Psoas muscle (tissue), 8 donors: ENCODE measurements at regions of chr17 and their contacts with region 1.

Region 1: DNA sequence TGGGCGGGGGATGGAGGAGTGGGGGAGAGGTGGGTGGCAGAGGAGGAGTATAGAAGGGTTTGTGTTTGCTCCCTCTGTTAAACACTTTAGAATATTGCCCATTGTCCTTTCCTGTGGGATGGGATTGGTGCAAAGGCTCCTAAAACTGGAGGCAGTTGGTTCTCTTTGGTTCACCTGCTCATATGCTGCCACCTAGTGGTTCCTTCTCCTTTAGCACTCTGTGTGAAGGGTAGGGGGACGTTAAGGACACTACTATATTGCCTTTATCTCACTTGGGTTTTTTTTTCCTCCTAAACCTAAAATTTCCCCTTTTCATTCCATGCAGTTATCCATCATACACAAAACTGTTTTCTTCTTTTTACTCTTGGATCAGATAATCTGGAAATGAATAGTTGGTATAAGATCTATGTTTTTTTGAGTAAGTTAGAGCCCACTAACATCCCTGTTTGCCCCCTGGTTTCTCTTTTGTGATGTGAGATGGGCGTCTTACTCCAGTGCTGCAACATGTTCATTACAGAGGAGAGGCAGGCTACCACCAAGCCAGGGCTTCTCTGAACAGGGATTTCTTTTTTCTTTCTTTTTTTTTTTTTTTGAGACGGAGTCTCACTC is 23.8 kb downstream of the SNX11 start:
- DNase-seq: no peak
- ATAC-seq: peak; percentile 70 to 94 (median 86)
- H3K4me3 ChIP-seq: no peak overlapping the region
- H3K27ac ChIP-seq: no peak overlapping the region
- H3K4me1 ChIP-seq: no peaks in the 10 kb centered on the region
- H3K27me3 ChIP-seq: no peaks in the 10 kb centered on the region
- CTCF ChIP-seq: peak; percentile 90

Region 2: GRCh38 chr17:47821424-47822391 is 309.6 kb before region 1 on chr17 and contains the start of gene OSBPL7:
- intact Hi-C with region 1: loop called in 1 of 2 experiments (anchors 10 kb)
- DNase-seq: peak; percentile 77 to 93
- ATAC-seq: peak; percentile 90 to 95 (median 94)
- H3K4me3 ChIP-seq: peak within 1 kb of the TSS; percentile 84
- H3K27ac ChIP-seq: peak within 1 kb of the TSS; percentile 92
- H3K4me1 ChIP-seq: peaks cover 21% of the 10 kb centered on the region
- H3K27me3 ChIP-seq: no peaks in the 10 kb centered on the region
- CTCF ChIP-seq: no peak
- total RNA-seq, gene OSBPL7: 2.6 to 23.4 (median 5.3) TPM

Region 3: GRCh38 chr17:47840740-47841603 is 290.3 kb before region 1 on chr17 and contains the start of gene SCRN2:
- intact Hi-C with region 1: loop called in 1 of 2 experiments (anchors 10 kb)
- DNase-seq: peak; percentile 89 to 96
- ATAC-seq: peak; percentile 96 to 99 (median 98)
- H3K4me3 ChIP-seq: peak within 1 kb of the TSS; percentile 77
- H3K27ac ChIP-seq: peak within 1 kb of the TSS; percentile 65
- H3K4me1 ChIP-seq: peaks cover 13% of the 10 kb centered on the region
- H3K27me3 ChIP-seq: peaks cover 0 to 7% (median 0%) of the 10 kb centered on the region in 3 donors
- CTCF ChIP-seq: peak; percentile 96
- total RNA-seq, gene SCRN2: 12.2 to 33.5 (median 19.5) TPM

Region 4: DNA sequence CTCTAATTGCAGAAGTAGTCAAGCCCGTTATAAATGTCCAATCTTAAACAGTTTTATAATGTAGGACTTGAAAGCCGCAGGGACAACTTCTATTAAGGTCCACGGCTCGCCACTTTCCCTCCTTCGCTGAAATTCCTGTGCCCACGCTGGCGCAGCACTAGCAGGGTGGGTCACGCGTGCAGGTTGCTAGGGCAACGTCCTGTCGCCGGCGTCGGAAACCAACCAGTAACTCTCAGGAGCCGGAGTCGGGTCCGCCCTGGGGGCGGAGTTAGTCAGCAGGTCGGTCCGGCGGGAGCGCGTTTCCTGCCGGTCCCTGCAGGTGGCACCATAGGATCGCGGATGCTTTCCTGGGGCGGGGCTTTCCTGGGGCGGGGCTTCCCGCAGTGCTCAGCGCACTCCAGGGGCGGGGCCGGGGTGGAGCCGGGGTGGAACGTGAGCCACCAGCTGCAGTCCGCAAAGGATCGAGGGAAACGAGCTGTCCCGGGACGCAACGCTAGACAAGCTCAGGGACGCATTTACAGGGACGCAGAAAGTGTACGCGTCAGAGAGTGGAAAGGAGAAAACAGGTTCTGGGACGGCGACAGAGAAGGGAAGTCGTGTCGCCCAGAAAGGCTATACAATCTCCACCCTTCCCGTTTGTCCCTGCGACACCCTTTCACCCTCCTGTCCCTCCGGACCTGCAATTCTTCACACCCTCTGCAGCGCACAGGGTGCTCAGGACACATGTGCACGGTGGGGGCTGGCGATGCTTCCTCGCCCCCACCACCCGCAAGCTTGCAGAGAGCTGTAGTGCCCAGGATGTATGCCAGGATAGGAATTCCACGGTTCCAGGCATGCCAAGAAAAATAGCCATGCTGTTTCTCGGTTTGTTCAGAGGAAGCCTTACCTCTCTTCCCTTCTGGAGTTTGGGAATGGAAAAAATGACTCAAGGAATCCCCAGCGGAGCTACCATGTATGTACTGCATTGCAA is 106.1 kb before region 1 on chr17:
- intact Hi-C with region 1: loop called (anchors 1 to 2 kb)
- DNase-seq: peak; percentile 97 to 99
- ATAC-seq: peak; percentile 86 to 89 (median 87)
- H3K4me3 ChIP-seq: peak overlapping the region; percentile 67
- H3K27ac ChIP-seq: peak overlapping the region; percentile 79
- H3K4me1 ChIP-seq: peaks cover 39% of the 10 kb centered on the region
- H3K27me3 ChIP-seq: peaks cover 0 to 3% (median 0%) of the 10 kb centered on the region in 3 donors
- CTCF ChIP-seq: peak; percentile 67

Region 5: GRCh38 chr17:48074315-48075081 is 56.8 kb before region 1 on chr17:
- intact Hi-C with region 1: loop called in 1 of 2 experiments (anchors 5 kb)
- DNase-seq: peak; percentile 58 to 83
- ATAC-seq: peak; percentile 80 to 83 (median 80)
- H3K4me3 ChIP-seq: no peak overlapping the region
- H3K27ac ChIP-seq: peak overlapping the region; percentile 69
- H3K4me1 ChIP-seq: peaks cover 15% of the 10 kb centered on the region
- H3K27me3 ChIP-seq: no peaks in the 10 kb centered on the region
- CTCF ChIP-seq: peak; percentile 87

Region 6: DNA sequence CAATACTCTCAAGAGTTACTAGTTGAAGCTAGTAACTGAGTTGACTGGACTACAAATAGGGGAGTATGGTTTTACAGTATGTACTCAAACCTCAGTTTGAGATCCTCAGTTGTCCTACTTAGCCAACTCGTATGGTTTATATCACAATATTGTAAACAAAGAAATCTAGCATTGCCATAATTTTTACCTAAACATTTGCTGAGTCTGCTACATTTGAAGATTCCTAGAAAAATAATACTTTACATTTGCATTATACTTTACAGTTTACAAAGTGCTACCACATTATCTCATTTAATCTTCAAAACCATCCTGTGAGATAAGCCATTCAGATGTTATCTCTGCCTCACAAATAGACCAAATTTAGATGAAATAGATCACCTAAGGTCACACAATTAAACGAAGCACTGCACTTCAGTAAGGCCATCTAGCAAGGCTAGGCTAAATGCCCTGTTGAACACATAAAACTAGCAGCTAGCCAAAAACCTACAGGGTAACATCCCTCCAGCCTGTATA is 46.3 kb before region 1 on chr17:
- intact Hi-C with region 1: loop called in 1 of 2 experiments (anchors 10 kb)
- DNase-seq: no peak
- ATAC-seq: peak in 2 of 4 donors; percentile 40
- H3K4me3 ChIP-seq: no peak overlapping the region
- H3K27ac ChIP-seq: no peak overlapping the region
- H3K4me1 ChIP-seq: peaks cover 17% of the 10 kb centered on the region
- H3K27me3 ChIP-seq: no peaks in the 10 kb centered on the region
- CTCF ChIP-seq: no peak

Region 7: DNA sequence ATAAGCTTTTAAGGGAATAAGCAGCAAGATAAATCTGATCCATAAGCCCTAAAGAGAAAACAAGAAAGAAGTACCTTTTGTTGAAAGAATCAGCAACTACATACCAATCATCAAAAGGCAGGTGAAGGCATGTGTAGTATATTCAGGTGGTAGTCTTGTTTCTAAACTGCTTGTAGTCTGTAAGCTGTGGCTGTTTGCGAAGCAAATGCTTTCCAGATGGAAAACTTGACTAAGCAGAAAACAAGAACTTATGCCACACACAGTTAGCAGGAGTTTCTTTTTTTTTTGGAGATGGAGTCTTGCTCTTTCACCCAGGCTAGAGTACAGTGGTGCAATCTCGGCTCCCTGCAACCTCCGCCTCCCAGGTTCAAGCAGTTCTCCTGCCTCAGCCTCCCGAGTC is 35.7 kb before region 1 on chr17:
- intact Hi-C with region 1: no loop called
- DNase-seq: no peak
- ATAC-seq: no peak
- H3K4me3 ChIP-seq: no peak overlapping the region
- H3K27ac ChIP-seq: no peak overlapping the region
- H3K4me1 ChIP-seq: peaks cover 7% of the 10 kb centered on the region
- H3K27me3 ChIP-seq: no peaks in the 10 kb centered on the region
- CTCF ChIP-seq: no peak

Region 8: DNA sequence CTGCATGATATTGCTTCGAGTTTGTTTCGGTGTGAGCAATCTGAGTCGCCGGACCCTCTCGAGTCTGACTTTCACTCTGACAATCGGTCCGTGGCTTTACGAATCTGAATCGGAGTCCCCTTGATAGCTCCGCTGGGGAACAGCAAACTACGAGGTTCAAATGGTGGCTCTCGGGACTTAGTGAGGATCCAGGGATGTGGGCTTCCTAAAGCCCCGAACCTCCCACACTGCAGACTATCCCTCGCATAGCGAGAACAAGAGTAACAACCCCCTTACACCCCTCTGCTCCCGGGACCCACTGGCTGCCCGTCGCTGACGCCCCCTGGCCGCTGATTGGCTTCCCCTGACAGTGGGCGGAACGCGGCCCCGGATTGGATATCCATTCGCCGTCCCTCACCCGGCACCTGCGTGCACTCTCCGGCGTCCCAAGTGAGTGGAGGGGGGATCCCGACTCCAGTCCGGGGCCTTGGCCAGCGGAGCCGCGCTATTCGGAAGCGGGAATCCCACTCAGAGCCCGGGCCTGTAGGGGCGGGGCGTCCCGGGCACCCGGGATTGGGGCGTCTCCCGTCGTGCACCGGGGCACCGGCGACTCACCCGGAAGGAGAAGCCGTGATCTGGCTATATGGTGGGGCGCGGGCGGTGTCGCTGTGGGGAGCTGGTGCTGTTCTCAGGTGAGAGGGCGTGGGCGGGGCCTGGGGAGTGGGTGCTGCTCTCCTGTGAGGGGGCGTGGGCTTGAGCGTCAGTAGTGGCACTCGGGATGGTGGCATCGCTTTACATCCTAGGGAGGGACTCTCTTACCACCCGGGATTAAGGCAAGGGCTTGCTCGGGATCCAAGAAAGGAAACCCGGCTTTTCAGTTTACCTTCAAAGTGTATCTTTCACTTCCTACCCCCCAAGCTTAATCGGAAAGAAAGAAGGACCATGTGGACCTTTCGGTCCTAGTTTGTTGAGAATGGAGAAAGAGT is 23.9 kb before region 1 on chr17 and contains the start of gene SNX11:
- intact Hi-C with region 1: loop called in 1 of 2 experiments (anchors 2 kb)
- DNase-seq: peak; percentile 90 to 93
- ATAC-seq: peak; percentile 96 to 98 (median 97)
- H3K4me3 ChIP-seq: peak within 1 kb of the TSS; percentile 96
- H3K27ac ChIP-seq: peak within 1 kb of the TSS; percentile 98
- H3K4me1 ChIP-seq: peaks cover 23% of the 10 kb centered on the region
- H3K27me3 ChIP-seq: no peaks in the 10 kb centered on the region
- CTCF ChIP-seq: no peak
- total RNA-seq, gene SNX11: 10.0 to 17.2 (median 12.3) TPM